ENCODE measurements at regions of chrX and their contacts with region 1.

Region 1: DNA sequence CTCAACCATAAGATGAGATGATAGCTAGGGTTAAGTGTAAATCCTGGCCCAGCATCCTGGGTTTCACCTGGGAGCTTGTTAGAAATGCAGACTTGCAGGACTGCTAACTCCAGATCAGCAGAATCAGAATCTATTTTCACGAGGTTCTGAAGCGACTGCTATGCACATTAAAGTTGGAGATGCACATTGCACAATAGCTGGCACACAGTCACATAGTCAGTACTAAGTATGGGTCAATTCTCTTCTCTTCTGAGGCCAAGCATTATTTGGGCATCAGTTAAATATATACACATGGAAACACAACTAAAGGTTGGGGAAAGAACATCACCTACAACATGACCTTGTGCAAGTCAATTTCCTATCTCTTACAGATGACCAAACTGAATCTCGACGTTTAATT is 155.1 kb upstream of the FGF13 start:
- DNase-seq: no peak
- ATAC-seq: no peak

Region 2: DNA sequence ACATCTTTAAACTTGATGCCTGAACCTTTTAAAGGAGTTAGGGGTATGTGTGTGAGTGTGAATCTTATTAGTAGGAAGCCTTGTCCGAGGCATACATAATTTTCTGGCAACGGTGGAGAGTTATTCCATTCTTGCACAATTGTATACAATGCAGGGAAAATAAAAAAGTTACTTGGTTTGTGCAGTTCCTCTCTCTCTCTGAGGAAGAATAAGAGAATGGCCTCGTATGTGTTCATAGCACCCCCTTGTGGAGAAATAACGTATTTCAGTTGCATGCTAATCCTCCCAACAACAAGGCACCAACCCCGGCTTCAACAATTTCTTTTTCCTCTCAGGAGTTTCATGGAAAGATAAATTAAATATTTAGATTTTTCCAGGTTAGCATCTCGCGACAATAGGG is 121.4 kb before region 1 on chrX:
- intact Hi-C with region 1: no loop called
- DNase-seq: no peak
- ATAC-seq: peak; percentile 57

Region 3: DNA sequence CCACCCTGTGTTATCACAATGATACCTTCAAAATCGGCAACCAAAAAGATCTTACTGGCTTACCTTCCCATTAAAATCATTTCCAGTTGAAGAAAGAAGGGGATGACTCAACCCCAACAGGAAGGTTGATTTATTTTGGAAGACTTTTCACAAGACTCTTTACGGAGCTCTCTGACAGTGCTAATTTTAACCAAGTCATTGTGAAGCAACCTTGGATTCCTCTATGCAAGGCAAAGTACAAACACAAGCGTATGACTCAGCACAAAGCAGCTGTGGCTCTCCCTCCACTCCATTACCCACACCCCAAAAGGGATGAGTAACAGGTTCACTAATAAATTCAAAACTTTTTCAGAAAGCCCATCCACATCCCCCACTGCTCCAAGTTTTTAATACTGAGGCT is 58.7 kb after region 1 on chrX:
- intact Hi-C with region 1: loop called in 1 of 2 experiments (anchors 10 kb)
- DNase-seq: no peak
- ATAC-seq: no peak

Measured in left colon (tissue), 2 donors.